ENCODE measurements at regions of chr19 and their contacts with region 1.

Region 1: GRCh38 chr19:20077791-20078463 is at the start of gene ZNF90:
- DNase-seq: peak; percentile 99
- H3K4me3 ChIP-seq: peak within 1 kb of the TSS; percentile 36 to 63 (median 53)
- H3K27ac ChIP-seq: peak within 1 kb of the TSS; percentile 63 to 77 (median 67)
- H3K4me1 ChIP-seq: peaks cover 0 to 20% (median 9%) of the 10 kb centered on the region in 4 donors
- H3K27me3 ChIP-seq: no peaks in the 10 kb centered on the region
- CTCF ChIP-seq: no peak
- EP300 ChIP-seq: no peak
- POLR2A ChIP-seq: no peak
- total RNA-seq, gene ZNF90: 2.8 to 4.6 (median 3.6) TPM

Region 2: DNA sequence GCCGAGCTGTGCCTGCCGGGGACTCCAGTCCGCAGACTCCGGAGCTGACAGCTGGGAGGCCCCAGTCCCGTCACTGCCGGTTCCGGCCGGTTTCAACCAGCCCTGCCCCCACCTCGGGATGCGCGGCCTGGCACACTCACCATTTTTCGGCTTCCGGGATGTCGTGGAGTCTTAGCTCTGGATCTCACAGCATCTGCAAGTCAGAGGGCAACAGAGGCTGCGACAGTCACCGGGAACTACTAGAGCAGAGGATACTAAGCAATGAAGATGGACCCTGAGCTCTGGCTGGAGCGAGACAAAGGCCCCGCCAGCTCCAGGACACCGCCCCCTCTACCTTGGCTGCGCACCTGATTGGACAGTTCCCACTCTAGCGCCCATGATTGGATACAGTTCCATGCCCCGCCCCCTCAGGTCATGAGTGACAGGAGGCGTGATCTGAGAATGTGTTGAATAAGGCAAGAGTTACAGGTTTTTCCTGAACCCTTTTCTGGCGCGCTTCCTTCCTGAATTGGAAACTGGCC is 38.7 kb before region 1 on chr19 and contains the start of gene ZNF682:
- intact Hi-C with region 1: loop called (anchors 1 kb)
- DNase-seq: peak; percentile 97
- H3K4me3 ChIP-seq: peak within 1 kb of the TSS; percentile 58 to 83 (median 70)
- H3K27ac ChIP-seq: peak within 1 kb of the TSS; percentile 65 to 83 (median 71)
- H3K4me1 ChIP-seq: peaks cover 0 to 12% (median 8%) of the 10 kb centered on the region in 4 donors
- H3K27me3 ChIP-seq: no peaks in the 10 kb centered on the region
- CTCF ChIP-seq: no peak
- EP300 ChIP-seq: peak in 1 of 4 donors; percentile 62
- POLR2A ChIP-seq: no peak
- total RNA-seq, gene ZNF682: 1.8 to 3.0 (median 2.1) TPM

Measured in sigmoid colon (tissue), 7 donors.